Mucosa of descending colon (tissue), 3 donors: ENCODE measurements at regions of chr20 and their contacts with region 1.

Region 1: GRCh38 chr20:2210646-2211552 is 84.9 kb upstream of the TGM3 start:
- DNase-seq: peak in 2 of 3 donors; percentile 51
- ATAC-seq: peak; percentile 64
- H3K4me3 ChIP-seq: no peak overlapping the region
- H3K4me1 ChIP-seq: peaks cover 16% of the 10 kb centered on the region
- CTCF ChIP-seq: no peak

Region 2: GRCh38 chr20:2451939-2452732 is 241.2 kb after region 1 on chr20:
- intact Hi-C with region 1: loop called in 1 of 2 experiments (anchors 10 kb)
- DNase-seq: peak in 2 of 3 donors; percentile 58 to 83
- ATAC-seq: peak; percentile 89
- H3K4me3 ChIP-seq: no peak overlapping the region
- H3K4me1 ChIP-seq: no peaks in the 10 kb centered on the region
- CTCF ChIP-seq: peak; percentile 77

Region 3: GRCh38 chr20:2713285-2713684 is 502.4 kb after region 1 on chr20:
- intact Hi-C with region 1: no loop called
- DNase-seq: no peak
- ATAC-seq: peak; percentile 39
- H3K4me3 ChIP-seq: no peak overlapping the region
- H3K4me1 ChIP-seq: no peaks in the 10 kb centered on the region
- CTCF ChIP-seq: no peak